ENCODE measurements at regions of chr19 and their contacts with region 1.

Region 1: GRCh38 chr19:13995878-13996765 is 10.0 kb downstream of the RFX1 start:
- DNase-seq: no peak
- H3K4me3 ChIP-seq: no peak overlapping the region
- H3K27ac ChIP-seq: no peak overlapping the region
- H3K4me1 ChIP-seq: no peaks in the 10 kb centered on the region
- H3K27me3 ChIP-seq: no peaks in the 10 kb centered on the region
- CTCF ChIP-seq: no peak
- EP300 ChIP-seq: no peak
- POLR2A ChIP-seq: no peak

Region 2: DNA sequence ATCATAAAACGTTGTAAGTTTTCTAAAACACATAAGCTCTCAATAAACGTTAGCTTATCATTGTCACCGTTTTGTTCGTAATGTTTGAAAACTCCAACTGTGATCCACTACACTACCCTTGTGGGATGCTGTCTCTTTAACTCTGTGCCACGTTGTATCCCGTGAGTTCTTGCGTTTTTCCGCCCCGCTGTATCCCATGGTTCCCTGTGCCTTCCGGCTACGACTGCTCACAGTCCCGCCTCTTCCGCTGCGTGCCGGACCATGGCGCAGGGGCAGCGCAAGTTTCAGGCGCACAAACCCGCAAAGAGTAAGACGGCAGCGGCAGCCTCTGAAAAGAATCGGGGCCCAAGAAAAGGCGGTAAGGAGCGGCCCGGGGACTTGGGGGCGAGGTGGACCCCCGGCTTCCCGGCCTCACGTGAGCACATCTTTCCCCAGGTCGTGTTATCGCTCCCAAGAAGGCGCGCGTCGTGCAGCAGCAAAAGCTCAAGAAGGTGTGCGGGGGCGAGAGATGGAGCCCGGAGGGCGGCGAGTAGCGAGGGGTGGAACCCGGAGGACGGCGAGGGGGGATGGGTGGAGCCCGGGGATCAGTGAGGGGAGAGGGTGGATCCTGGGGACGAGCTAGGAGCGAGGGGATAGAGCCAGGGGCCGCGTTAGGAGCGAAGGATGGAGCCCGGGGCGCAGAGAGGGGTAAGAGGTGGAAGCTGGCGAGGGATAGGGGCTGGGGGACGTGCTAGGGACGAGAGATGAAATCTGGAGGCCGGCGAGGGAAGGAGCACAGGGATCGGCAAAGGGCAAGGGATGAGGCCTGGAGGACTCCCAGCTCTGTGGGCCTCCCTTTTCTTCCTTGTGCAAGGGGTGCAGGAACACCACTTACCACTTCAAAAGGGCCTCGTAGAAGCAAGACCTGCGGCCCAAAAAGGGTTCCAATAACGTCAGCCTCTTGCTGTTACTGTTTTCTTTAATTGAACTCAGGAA is 221.6 kb before region 1 on chr19 and contains the start of gene C19orf53:
- intact Hi-C with region 1: no loop called
- DNase-seq: peak; percentile 85 to 92 (median 88)
- H3K4me3 ChIP-seq: peak within 1 kb of the TSS; percentile 95
- H3K27ac ChIP-seq: peak within 1 kb of the TSS; percentile 9 to 52
- H3K4me1 ChIP-seq: peaks cover 7% of the 10 kb centered on the region
- H3K27me3 ChIP-seq: no peaks in the 10 kb centered on the region
- CTCF ChIP-seq: peak in 1 of 3 donors; percentile 10
- EP300 ChIP-seq: no peak
- POLR2A ChIP-seq: peak; percentile 93
- total RNA-seq, gene C19orf53: 76.4 to 298 (median 91.3) TPM

Region 3: DNA sequence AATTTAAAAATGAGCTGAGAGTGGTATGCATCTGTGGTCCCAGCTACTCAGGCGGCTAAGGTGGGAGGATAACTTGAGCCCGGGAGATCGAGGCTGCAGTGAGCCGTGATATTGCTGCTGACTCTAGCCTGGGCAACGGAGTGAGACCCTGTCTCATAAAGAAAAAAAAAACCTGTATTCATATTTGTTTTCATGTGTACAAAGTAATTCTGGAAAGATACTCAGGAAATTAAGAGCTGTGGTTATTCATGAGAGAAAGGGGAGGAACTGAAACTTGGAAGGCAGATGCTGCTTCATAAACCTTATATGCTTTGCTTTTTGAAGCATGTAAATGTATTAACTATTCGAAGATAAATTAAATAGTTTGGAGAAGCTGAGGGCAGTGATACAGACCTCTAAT is 23.0 kb after region 1 on chr19:
- intact Hi-C with region 1: loop called in 1 of 4 experiments (anchors 2 kb)
- DNase-seq: no peak
- H3K4me3 ChIP-seq: no peak overlapping the region
- H3K27ac ChIP-seq: no peak overlapping the region
- H3K4me1 ChIP-seq: no peaks in the 10 kb centered on the region
- H3K27me3 ChIP-seq: no peaks in the 10 kb centered on the region
- CTCF ChIP-seq: no peak
- EP300 ChIP-seq: no peak
- POLR2A ChIP-seq: no peak

Region 4: DNA sequence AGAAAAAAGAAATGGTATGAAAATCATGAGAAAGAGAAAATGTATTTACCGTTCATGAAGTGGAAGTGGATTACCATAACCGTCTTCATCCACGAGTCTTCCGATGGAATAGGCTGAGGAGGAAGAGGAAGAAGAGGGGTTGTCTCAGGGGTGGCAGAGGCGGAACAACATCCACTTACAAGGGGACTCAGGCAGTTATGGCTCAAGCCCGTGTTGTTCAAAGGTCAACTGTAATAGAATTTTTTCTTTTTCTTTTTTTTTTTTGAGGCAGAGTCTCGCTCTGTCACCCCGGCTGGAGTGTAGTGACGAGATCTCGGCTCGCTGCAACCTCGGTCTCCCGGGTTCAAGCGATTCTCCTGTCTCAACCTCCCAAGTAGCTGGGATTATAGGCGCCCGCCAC is 226.8 kb after region 1 on chr19:
- intact Hi-C with region 1: no loop called
- DNase-seq: no peak
- H3K4me3 ChIP-seq: no peak overlapping the region
- H3K27ac ChIP-seq: no peak overlapping the region
- H3K4me1 ChIP-seq: no peaks in the 10 kb centered on the region
- H3K27me3 ChIP-seq: no peaks in the 10 kb centered on the region
- CTCF ChIP-seq: no peak
- EP300 ChIP-seq: no peak
- POLR2A ChIP-seq: no peak

Region 5: DNA sequence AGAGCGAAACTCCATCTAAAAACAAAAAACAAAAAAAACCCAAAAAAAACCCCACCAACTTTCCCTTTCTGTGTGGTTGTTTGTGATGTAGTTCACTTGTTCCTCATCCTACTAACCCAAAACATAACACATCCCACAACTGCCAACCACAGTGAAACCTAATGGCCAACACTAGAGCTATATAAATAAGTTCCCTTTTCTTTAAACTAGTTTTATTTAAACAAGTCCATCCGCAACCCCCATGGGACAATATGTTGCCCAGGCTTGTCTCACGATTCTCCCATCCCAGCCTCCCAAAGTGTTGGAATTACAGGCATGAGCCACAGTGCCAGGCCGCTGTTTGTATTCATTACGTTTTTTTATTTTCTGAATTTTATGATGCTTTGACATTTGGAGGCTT is 313.9 kb after region 1 on chr19:
- intact Hi-C with region 1: no loop called
- DNase-seq: no peak
- H3K4me3 ChIP-seq: no peak overlapping the region
- H3K27ac ChIP-seq: no peak overlapping the region
- H3K4me1 ChIP-seq: no peaks in the 10 kb centered on the region
- H3K27me3 ChIP-seq: no peaks in the 10 kb centered on the region
- CTCF ChIP-seq: no peak
- EP300 ChIP-seq: no peak
- POLR2A ChIP-seq: no peak

Measured in ovary (tissue), 10 donors.